ENCODE measurements at regions of chr18 and their contacts with region 1.

Region 1: GRCh38 chr18:55322178-55322735 is 265.7 kb downstream of the TCF4 start:
- DNase-seq: peak; percentile 75
- CTCF ChIP-seq: no peak

Region 2: GRCh38 chr18:53426656-53427184 is 1895.5 kb before region 1 on chr18:
- in situ Hi-C with region 1: no loop called
- DNase-seq: no peak
- CTCF ChIP-seq: no peak

Region 3: DNA sequence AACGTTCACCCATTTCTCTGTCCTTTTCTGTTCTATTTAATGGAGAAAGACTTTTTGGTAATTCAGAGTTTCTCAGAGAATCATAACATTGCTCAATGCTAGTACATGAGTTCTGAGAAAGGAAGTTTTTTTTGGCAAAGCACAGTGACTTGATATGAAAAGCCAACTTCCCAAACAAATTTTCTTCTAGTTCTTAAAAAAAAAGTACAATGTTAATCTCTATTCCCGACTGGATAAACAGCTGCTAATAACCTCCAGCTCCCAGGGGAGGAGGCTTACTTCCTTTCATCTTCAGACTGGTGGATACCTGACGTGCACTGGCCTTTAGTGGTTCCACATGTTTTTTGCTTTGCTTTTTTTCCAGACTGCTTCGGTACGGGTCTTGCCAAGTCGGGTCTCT is 78.4 kb before region 1 on chr18:
- in situ Hi-C with region 1: loop called (anchors 10 kb)
- DNase-seq: no peak
- CTCF ChIP-seq: no peak